Natural killer cell (primary cell): ENCODE measurements at regions of chr10 and their contacts with region 1.

Region 1: DNA sequence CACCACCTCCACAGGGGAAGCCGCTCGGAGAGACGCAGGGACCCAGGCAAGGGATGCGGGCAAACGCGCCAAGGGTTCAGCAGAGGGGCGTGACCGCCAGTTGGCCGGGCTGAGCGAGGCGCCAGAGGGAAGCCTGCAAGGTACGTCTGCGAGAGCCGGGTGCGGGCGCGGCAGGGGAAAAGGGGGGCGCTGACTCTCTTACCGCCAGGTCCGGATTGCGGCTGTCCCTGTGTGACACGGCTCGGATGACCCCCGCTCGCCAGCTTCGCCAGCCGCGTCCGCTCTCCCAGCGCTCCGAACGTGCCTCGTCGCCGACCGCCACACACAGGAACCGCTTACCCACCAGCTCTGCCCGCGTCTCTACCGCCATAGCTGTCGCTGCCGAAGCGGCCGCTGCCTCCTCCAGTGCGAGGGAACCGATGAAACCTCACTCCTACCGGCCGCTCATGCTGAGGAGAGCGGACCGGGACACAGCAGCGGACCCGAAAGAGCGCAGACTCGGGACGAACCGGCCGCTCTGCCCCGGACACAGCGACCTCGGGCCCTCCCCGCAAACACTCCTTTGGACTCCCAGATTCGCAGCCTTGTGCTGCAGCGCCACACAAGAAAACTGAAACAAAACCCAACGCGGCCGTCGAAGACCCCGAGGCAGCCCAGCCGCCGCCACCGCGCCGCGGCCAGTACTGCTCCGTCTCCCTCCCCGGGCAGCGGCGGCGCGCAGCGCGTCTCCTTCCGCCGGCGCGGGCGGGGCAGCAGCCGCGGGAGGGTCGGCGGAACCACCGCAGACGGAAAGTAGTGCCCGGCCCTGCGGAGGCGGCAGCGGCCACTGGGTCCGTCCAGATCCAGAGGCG is at the start of gene JMJD1C:
- DNase-seq: peak; percentile 64 to 77
- ATAC-seq: peak; percentile 80 to 86 (median 81)
- H3K4me3 ChIP-seq: peak within 1 kb of the TSS; percentile 81
- H3K4me3 Mint-ChIP-seq: peak within 1 kb of the TSS; percentile 97
- H3K27ac ChIP-seq: peak within 1 kb of the TSS; percentile 63
- H3K27ac Mint-ChIP-seq: peak within 1 kb of the TSS; percentile 85 to 93
- H3K4me1 ChIP-seq: peaks cover 8% of the 10 kb centered on the region
- H3K4me1 Mint-ChIP-seq: peaks cover 19 to 25% of the 10 kb centered on the region in 2 donors
- H3K27me3 ChIP-seq: no peaks in the 10 kb centered on the region
- H3K27me3 Mint-ChIP-seq: peaks cover 2 to 7% of the 10 kb centered on the region in 2 donors
- CTCF ChIP-seq: no peak
- total RNA-seq, gene JMJD1C: 125 to 208 (median 156) TPM

Region 2: DNA sequence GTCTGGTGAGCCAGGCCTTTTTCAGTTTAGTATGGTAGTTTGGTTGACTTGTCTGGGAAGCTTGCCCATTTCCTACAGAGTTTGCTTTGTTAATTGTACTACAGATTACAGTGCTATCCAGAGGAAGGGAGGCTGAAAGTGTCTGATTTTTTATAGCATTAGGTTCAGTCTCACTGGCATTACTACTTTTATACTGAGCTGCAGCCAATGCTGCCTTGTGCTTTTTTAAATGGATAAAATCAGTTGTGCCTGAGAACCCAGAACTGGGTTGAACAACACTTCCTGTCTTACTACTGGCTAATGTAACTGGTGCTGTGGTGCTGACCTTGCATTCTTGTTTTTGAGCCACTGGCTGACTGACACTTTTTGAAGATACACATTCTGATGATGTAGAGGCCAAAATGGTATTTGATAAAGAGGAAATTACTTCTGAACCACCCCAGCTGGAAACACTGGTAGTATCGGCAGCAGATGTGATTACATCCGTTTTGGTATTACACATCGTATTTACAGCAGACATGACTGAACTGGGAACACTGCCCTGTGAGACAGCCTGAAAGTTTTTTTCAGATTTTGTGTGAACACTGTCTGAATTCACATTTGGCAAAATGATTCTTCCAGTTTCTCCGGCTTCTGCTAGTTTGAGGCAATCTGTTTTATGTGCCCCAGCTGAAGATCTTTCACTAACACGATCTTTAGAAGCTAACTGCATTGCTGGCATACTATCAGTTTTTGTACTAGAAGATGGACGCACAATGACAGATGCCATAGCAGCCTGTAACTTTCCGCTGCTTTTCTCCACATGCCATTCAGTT is 258.3 kb before region 1 on chr10:
- intact Hi-C with region 1: loop called (anchors 10 kb)
- DNase-seq: peak in 1 of 2 donors; percentile 32
- ATAC-seq: peak; percentile 10 to 47 (median 26)
- H3K4me3 ChIP-seq: no peak overlapping the region
- H3K4me3 Mint-ChIP-seq: no peak overlapping the region
- H3K27ac ChIP-seq: peak overlapping the region; percentile 27
- H3K27ac Mint-ChIP-seq: peak overlapping the region; percentile 5 to 15
- H3K4me1 ChIP-seq: peaks cover 3% of the 10 kb centered on the region
- H3K4me1 Mint-ChIP-seq: peaks cover 37 to 42% of the 10 kb centered on the region in 2 donors
- H3K27me3 ChIP-seq: no peaks in the 10 kb centered on the region
- H3K27me3 Mint-ChIP-seq: no peaks in the 10 kb centered on the region
- CTCF ChIP-seq: no peak

Region 3: GRCh38 chr10:63521416-63522276 is 56.1 kb after region 1 on chr10:
- intact Hi-C with region 1: loop called (anchors 5 kb)
- DNase-seq: peak; percentile 49 to 84
- ATAC-seq: peak; percentile 66 to 79 (median 71)
- H3K4me3 ChIP-seq: peak overlapping the region; percentile 84
- H3K4me3 Mint-ChIP-seq: peak overlapping the region; percentile 92
- H3K27ac ChIP-seq: peak overlapping the region; percentile 87
- H3K27ac Mint-ChIP-seq: peak overlapping the region; percentile 79 to 81
- H3K4me1 ChIP-seq: peaks cover 5% of the 10 kb centered on the region
- H3K4me1 Mint-ChIP-seq: peaks cover 27 to 31% of the 10 kb centered on the region in 2 donors
- H3K27me3 ChIP-seq: no peaks in the 10 kb centered on the region
- H3K27me3 Mint-ChIP-seq: no peaks in the 10 kb centered on the region
- CTCF ChIP-seq: no peak